ENCODE measurements at regions of chr15 and their contacts with region 1.

Region 1: DNA sequence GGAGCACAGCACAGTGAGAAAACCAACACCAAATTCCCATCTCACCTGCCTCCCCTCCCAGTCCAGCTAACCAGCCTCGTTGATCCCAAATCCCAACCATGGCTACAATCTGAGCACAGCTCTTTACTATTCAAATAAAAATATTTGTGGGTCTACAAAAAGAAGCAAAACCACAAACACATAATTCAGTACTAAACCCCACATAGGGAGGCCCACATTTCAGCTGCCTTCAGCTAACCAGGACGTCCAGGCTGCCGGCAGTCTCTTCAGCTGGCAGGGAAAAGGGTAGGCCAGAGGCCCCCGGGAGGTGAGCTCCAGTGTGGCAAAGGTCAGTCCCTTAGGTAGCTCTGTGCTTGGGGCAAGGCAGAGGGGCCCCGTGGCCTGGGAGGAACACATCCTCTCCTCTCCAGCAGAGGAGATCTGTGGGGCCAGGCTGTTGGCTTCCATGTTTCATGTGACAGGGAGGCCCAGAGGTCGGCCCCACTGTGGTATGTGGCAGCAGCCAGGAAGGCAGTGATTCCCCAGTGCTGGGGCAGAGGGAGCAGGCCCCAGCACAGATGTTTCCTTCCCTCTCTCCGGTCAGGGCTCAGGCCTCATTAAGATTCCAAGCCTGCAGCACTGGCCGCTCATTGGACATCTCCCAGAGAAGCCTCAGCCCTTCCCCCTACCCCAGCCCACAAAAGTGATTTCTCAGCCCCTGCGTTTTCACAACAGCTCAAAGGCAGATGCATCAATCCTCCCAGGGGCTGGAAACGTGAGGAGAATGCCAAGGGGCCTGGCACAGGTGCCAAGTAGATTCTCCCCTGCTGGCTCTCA is 381.4 kb downstream of the NTRK3 start:
- DNase-seq: peak in 1 of 2 donors; percentile 8
- ATAC-seq: peak in 7 of 8 donors; percentile 19 to 70 (median 50)
- H3K4me3 ChIP-seq: no peak overlapping the region
- H3K27ac ChIP-seq: no peak overlapping the region
- H3K4me1 ChIP-seq: peaks cover 0 to 16% (median 7%) of the 10 kb centered on the region in 9 donors
- H3K27me3 ChIP-seq: no peaks in the 10 kb centered on the region
- CTCF ChIP-seq: no peak

Region 2: GRCh38 chr15:87816811-87817210 is 58.3 kb before region 1 on chr15:
- intact Hi-C with region 1: loop called in 2 of 10 experiments (anchors 10 kb)
- DNase-seq: no peak
- ATAC-seq: no peak
- H3K4me3 ChIP-seq: no peak overlapping the region
- H3K27ac ChIP-seq: no peak overlapping the region
- H3K4me1 ChIP-seq: no peaks in the 10 kb centered on the region
- H3K27me3 ChIP-seq: no peaks in the 10 kb centered on the region
- CTCF ChIP-seq: no peak

Region 3: GRCh38 chr15:88018856-88019641 is 143.9 kb after region 1 on chr15:
- intact Hi-C with region 1: loop called in 1 of 10 experiments (anchors 10 kb)
- DNase-seq: no peak
- ATAC-seq: no peak
- H3K4me3 ChIP-seq: no peak overlapping the region
- H3K27ac ChIP-seq: no peak overlapping the region
- H3K4me1 ChIP-seq: peaks cover 0 to 3% (median 0%) of the 10 kb centered on the region in 9 donors
- H3K27me3 ChIP-seq: peaks cover 0 to 8% (median 0%) of the 10 kb centered on the region in 7 donors
- CTCF ChIP-seq: no peak

Region 4: DNA sequence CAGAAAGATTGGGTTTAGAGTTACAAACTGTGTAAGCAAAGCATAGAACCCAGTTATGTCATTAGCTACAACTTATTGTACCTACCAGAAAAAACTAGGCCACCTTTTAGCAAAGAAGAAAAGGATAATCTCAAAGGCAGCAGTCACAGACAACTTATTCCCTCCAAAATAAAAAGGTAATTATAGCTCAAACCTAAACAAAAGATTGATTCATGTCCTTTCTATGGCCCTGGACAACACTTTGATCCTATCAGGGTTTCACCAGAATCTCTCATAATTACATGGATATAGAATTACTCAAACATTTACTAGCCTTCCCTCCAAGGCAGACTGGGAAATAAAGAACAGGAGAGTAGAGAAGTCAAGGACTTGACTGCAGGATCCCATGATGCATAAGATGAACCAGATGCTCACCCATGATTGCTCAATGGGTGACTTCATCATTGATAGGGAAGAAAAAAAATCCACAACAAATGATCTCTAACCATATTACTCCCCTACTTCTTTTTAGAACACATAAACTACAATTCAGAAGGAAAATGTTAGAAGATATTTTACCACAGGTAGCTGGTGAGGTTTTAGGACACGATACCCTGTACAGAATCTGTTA is 654.0 kb after region 1 on chr15:
- intact Hi-C with region 1: loop called in 1 of 10 experiments (anchors 5 kb)
- DNase-seq: no peak
- ATAC-seq: no peak
- H3K4me3 ChIP-seq: no peak overlapping the region
- H3K27ac ChIP-seq: no peak overlapping the region
- H3K4me1 ChIP-seq: peaks cover 0 to 20% (median 3%) of the 10 kb centered on the region in 9 donors
- H3K27me3 ChIP-seq: no peaks in the 10 kb centered on the region
- CTCF ChIP-seq: no peak